ENCODE measurements at regions of chr2 and their contacts with region 1.

Region 1: DNA sequence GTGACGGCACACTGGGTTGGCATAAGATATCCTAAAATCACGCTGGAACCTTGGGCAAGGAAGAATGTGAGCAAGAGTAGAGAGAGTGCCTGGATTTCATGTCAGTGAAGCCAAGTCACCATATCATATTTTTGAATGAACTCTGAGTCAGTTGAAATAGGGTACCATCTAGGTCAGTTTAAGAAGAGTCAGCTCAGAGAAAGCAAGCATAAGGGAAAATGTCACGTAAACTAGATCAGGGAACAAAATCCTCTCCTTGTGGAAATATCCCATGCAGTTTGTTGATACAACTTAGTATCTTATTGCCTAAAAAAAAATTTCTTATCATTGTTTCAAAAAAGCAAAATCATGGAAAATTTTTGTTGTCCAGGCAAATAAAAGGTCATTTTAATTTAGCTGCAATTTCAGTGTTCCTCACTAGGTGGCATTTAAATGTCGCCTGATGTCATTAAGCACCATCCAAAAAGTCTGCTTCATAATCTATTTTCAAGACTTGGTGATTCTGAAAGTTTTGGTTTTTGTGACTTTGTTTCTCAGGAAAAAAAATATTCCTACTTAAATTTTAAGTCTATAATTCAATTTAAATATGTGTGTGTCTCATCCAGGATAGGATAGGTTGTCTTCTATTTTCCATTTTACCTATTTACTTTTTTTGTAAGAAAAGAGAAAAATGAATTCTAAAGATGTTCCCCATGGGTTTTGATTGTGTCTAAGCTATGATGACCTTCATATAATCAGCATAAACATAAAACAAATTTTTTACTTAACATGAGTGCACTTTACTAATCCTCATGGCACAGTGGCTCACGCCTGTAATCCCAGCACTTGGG is 19.6 kb downstream of the RSAD2 start:
- DNase-seq: no peak
- H3K4me3 Mint-ChIP-seq: no peak overlapping the region
- H3K27ac Mint-ChIP-seq: no peak overlapping the region
- H3K4me1 Mint-ChIP-seq: peaks cover 11% of the 10 kb centered on the region
- H3K27me3 Mint-ChIP-seq: no peaks in the 10 kb centered on the region

Region 2: GRCh38 chr2:6826081-6826913 is 70.8 kb before region 1 on chr2:
- CTCF ChIA-PET with region 1: interaction called, 4 read pairs
- POLR2A ChIA-PET with region 1: no interaction called
- intact Hi-C with region 1: loop called (anchors 2 kb)
- DNase-seq: peak; percentile 73
- H3K4me3 Mint-ChIP-seq: no peak overlapping the region
- H3K27ac Mint-ChIP-seq: no peak overlapping the region
- H3K4me1 Mint-ChIP-seq: peaks cover 7% of the 10 kb centered on the region
- H3K27me3 Mint-ChIP-seq: no peaks in the 10 kb centered on the region

Region 3: DNA sequence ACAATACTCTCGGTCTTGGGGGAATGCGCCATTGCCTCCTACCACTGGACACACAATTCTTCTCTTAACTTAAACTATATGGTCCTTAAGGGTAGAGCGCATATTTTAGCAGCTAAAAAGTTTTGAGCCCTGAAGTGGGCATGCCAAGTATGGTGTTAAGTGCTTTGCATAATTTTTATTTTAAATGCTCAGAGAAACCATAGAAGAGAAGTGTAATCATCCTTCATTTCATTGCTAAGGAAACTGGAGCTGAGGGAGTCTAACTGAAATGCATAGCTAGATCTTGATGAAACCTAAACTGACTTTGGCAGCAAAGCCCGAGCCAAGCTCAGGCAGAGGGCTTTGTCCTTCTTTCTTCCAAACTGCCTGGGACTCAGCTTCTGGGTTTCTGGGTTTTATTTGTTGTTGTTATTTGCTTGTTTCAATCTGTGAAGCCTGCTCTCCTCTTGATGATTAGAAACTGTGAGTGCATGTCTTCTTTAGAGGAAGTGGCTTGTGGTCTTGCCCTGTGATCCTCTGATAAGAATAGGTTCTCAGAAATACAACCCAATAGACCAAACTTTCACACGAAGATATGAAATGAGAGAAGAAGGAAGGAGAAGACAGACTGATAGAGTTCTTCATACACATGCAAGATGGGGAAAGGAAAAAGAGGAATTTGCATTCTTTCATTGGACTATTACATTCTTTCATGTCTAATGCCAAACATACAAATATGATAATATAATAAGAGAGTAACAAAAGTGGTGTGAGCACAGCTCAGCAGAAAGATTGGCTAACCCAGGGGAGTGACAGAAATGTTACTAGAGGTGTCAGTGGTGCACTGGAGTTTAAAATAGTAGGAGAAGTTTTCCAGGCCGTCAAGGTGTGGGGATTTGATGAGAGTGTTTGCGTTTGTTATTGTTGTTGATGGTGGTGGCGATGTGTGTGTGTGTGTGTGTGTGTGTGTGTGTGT is 12.6 kb after region 1 on chr2:
- CTCF ChIA-PET with region 1: interaction called, 26 read pairs
- POLR2A ChIA-PET with region 1: no interaction called
- intact Hi-C with region 1: loop called (anchors 1 kb)
- DNase-seq: peak; percentile 48
- H3K4me3 Mint-ChIP-seq: peak overlapping the region; percentile 23
- H3K27ac Mint-ChIP-seq: peak overlapping the region; percentile 66
- H3K4me1 Mint-ChIP-seq: peaks cover 84% of the 10 kb centered on the region
- H3K27me3 Mint-ChIP-seq: no peaks in the 10 kb centered on the region

Region 4: GRCh38 chr2:7014174-7014640 is 117.1 kb after region 1 on chr2:
- CTCF ChIA-PET with region 1: interaction called, 22 read pairs
- POLR2A ChIA-PET with region 1: no interaction called
- intact Hi-C with region 1: loop called (anchors 1 kb)
- DNase-seq: peak; percentile 29
- H3K4me3 Mint-ChIP-seq: no peak overlapping the region
- H3K27ac Mint-ChIP-seq: no peak overlapping the region
- H3K4me1 Mint-ChIP-seq: peaks cover 36% of the 10 kb centered on the region
- H3K27me3 Mint-ChIP-seq: no peaks in the 10 kb centered on the region

Region 5: GRCh38 chr2:7037340-7038333 is 140.5 kb after region 1 on chr2:
- CTCF ChIA-PET with region 1: interaction called, 109 read pairs
- POLR2A ChIA-PET with region 1: no interaction called
- intact Hi-C with region 1: no loop called
- DNase-seq: peak; percentile 64
- H3K4me3 Mint-ChIP-seq: no peak overlapping the region
- H3K27ac Mint-ChIP-seq: no peak overlapping the region
- H3K4me1 Mint-ChIP-seq: no peaks in the 10 kb centered on the region
- H3K27me3 Mint-ChIP-seq: no peaks in the 10 kb centered on the region

Region 6: DNA sequence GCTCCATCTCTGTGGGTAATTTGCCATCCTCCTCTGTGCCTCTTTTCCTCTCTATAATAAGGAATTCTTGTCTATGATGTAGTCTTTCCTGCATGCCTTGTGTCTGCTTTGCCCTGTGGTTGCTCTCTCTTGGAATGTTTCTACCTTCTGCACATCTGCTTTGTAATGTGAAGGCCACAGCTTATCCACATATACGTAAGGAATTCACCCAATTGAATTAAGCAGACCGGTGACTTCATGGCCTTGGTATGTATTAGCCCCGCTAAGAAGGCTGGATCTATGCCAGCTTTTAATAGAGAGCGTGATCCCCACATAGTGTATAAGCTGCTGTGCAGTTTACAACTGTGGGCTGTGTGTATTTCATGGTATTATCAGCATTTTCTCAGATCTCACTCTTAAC is 294.8 kb after region 1 on chr2:
- CTCF ChIA-PET with region 1: no interaction called
- POLR2A ChIA-PET with region 1: no interaction called
- intact Hi-C with region 1: no loop called
- DNase-seq: no peak
- H3K4me3 Mint-ChIP-seq: no peak overlapping the region
- H3K27ac Mint-ChIP-seq: no peak overlapping the region
- H3K4me1 Mint-ChIP-seq: peaks cover 6% of the 10 kb centered on the region
- H3K27me3 Mint-ChIP-seq: no peaks in the 10 kb centered on the region

Measured in activated CD4-positive, alpha-beta memory T cell treated with anti-CD3 and anti-CD28 coated beads for 36 hours (primary cell).